CD14-positive monocyte (primary cell): ENCODE measurements at regions of chr1 and their contacts with region 1.

Region 1: GRCh38 chr1:89112871-89113613 is 12.9 kb downstream of the GBP2 start:
- DNase-seq: no peak
- H3K4me3 ChIP-seq: no peak overlapping the region
- H3K4me3 Mint-ChIP-seq: no peak overlapping the region
- H3K27ac ChIP-seq: no peak overlapping the region
- H3K27ac Mint-ChIP-seq: peak overlapping the region in 1 of 7 donors; percentile 33
- H3K4me1 ChIP-seq: no peaks in the 10 kb centered on the region
- H3K4me1 Mint-ChIP-seq: no peaks in the 10 kb centered on the region
- H3K27me3 ChIP-seq: no peaks in the 10 kb centered on the region
- H3K27me3 Mint-ChIP-seq: peaks cover 0 to 4% (median 0%) of the 10 kb centered on the region in 3 donors
- CTCF ChIP-seq: no peak

Region 2: GRCh38 chr1:88783145-88783544 is 329.9 kb before region 1 on chr1:
- intact Hi-C with region 1: no loop called
- DNase-seq: no peak
- H3K4me3 ChIP-seq: no peak overlapping the region
- H3K4me3 Mint-ChIP-seq: no peak overlapping the region
- H3K27ac ChIP-seq: no peak overlapping the region
- H3K27ac Mint-ChIP-seq: peak overlapping the region in 1 of 7 donors; percentile 78
- H3K4me1 ChIP-seq: peaks cover 4 to 14% of the 10 kb centered on the region in 2 donors
- H3K4me1 Mint-ChIP-seq: peaks cover 12% of the 10 kb centered on the region
- H3K27me3 ChIP-seq: no peaks in the 10 kb centered on the region
- H3K27me3 Mint-ChIP-seq: peaks cover 0 to 2% (median 0%) of the 10 kb centered on the region in 3 donors
- CTCF ChIP-seq: no peak

Region 3: DNA sequence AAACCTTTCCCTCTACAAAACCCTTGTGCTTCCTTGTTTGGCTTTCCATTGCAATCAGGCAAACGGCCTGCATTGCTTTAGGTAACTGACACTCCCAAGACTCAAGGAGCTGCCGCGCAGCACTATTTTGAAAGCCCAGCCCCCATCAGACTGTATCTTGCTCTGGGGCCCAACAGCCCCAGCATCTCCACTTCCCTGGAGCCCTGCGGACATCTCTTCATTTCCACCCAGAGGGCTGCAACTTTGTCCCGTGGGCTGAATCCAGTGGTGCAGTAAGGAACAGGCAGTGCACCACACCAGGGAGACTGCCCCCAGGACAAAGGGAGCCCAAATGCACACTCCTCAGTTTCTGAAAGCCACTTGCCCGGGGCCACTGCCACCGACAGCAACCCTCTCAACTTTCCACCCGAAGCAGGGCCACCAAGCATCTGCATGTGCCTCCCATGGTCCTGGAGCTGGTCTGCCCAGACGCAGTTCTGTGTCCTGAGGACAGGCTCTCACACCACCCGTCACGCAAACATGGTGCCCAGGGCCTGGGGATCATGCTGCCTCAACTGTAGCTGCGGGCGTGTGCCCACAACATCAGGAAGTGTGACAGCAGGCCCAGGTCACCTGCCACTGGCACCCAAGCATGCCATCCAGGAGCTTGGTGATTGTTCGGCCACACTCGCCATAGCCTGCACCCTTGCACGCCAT is 62.6 kb before region 1 on chr1:
- intact Hi-C with region 1: loop called in 1 of 2 experiments (anchors 10 kb)
- DNase-seq: no peak
- H3K4me3 ChIP-seq: no peak overlapping the region
- H3K4me3 Mint-ChIP-seq: no peak overlapping the region
- H3K27ac ChIP-seq: peak overlapping the region in 1 of 2 donors; percentile 31
- H3K27ac Mint-ChIP-seq: peak overlapping the region in 6 of 7 donors; percentile 0 to 80 (median 58)
- H3K4me1 ChIP-seq: peaks cover 13 to 14% of the 10 kb centered on the region in 2 donors
- H3K4me1 Mint-ChIP-seq: peaks cover 13% of the 10 kb centered on the region
- H3K27me3 ChIP-seq: no peaks in the 10 kb centered on the region
- H3K27me3 Mint-ChIP-seq: no peaks in the 10 kb centered on the region
- CTCF ChIP-seq: no peak

Region 4: GRCh38 chr1:89065079-89065868 is 47.8 kb before region 1 on chr1 and contains the start of gene GBP1:
- intact Hi-C with region 1: no loop called
- DNase-seq: peak; percentile 45 to 86 (median 71)
- H3K4me3 ChIP-seq: peak within 1 kb of the TSS; percentile 52 to 100 (median 82)
- H3K4me3 Mint-ChIP-seq: peak within 1 kb of the TSS; percentile 79 to 97
- H3K27ac ChIP-seq: peak within 1 kb of the TSS; percentile 50 to 93
- H3K27ac Mint-ChIP-seq: peak within 1 kb of the TSS; percentile 68 to 94 (median 89)
- H3K4me1 ChIP-seq: peaks cover 16 to 44% of the 10 kb centered on the region in 2 donors
- H3K4me1 Mint-ChIP-seq: peaks cover 50% of the 10 kb centered on the region
- H3K27me3 ChIP-seq: no peaks in the 10 kb centered on the region
- H3K27me3 Mint-ChIP-seq: no peaks in the 10 kb centered on the region
- CTCF ChIP-seq: no peak
- polyA plus RNA-seq, gene GBP1: 19.5 to 35.2 (median 23.7) TPM

Region 5: GRCh38 chr1:89179343-89179742 is 66.3 kb after region 1 on chr1:
- intact Hi-C with region 1: no loop called
- DNase-seq: no peak
- H3K4me3 ChIP-seq: no peak overlapping the region
- H3K4me3 Mint-ChIP-seq: no peak overlapping the region
- H3K27ac ChIP-seq: no peak overlapping the region
- H3K27ac Mint-ChIP-seq: no peak overlapping the region
- H3K4me1 ChIP-seq: no peaks in the 10 kb centered on the region
- H3K4me1 Mint-ChIP-seq: no peaks in the 10 kb centered on the region
- H3K27me3 ChIP-seq: no peaks in the 10 kb centered on the region
- H3K27me3 Mint-ChIP-seq: no peaks in the 10 kb centered on the region
- CTCF ChIP-seq: no peak

Region 6: GRCh38 chr1:89206373-89206772 is 93.3 kb after region 1 on chr1:
- intact Hi-C with region 1: no loop called
- DNase-seq: peak; percentile 15 to 46 (median 30)
- H3K4me3 ChIP-seq: no peak overlapping the region
- H3K4me3 Mint-ChIP-seq: no peak overlapping the region
- H3K27ac ChIP-seq: no peak overlapping the region
- H3K27ac Mint-ChIP-seq: no peak overlapping the region
- H3K4me1 ChIP-seq: no peaks in the 10 kb centered on the region
- H3K4me1 Mint-ChIP-seq: peaks cover 4% of the 10 kb centered on the region
- H3K27me3 ChIP-seq: no peaks in the 10 kb centered on the region
- H3K27me3 Mint-ChIP-seq: peaks cover 0 to 3% (median 0%) of the 10 kb centered on the region in 3 donors
- CTCF ChIP-seq: no peak